Activated CD8-positive, alpha-beta T cell treated with anti-CD3 and anti-CD28 coated beads for 36 hours (primary cell): ENCODE measurements at regions of chr19 and their contacts with region 1.

Region 1: DNA sequence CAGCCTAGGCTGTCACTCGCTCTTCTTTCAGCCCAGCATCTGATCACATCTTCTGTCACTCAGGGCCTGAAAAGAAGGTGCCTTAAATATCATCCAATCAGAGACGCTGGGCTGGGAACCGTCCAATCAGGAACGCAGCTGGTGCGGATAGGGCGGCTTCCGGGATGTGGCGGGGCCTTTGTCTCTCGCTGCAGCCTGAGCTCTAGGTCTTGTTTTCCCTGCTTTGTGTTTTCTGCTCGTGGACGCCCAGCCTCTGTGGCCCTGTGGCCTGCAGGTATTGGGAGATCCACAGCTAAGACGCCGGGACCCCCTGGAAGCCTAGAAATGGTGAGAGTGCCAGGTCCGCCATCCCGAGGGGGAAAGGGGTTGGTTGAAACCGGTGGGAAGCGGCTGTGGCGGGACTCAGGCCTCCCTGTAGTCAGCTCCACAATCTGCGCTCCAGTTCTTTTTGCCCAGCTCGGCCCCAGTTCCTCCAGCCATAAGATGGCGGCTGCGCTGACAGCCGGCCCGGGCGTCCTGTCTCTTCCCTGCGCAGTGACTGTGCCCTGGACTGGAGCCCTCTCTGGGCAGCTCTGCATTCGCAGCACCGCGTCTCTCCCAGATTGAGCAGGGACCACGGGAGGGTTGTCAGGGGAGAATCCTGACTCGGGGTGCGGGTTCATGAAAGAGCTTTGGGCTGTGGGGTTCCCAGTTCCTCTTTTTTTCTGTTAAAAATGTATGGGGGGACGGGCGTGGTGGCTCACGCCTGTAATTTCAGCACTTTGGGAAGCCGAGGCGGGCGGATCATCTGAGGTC is at the start of gene ZNF85:
- DNase-seq: peak; percentile 97
- ATAC-seq: peak; percentile 99
- H3K4me3 Mint-ChIP-seq: peak within 1 kb of the TSS; percentile 99
- H3K27ac Mint-ChIP-seq: peak within 1 kb of the TSS; percentile 96
- H3K4me1 Mint-ChIP-seq: peaks cover 32% of the 10 kb centered on the region
- H3K27me3 Mint-ChIP-seq: no peaks in the 10 kb centered on the region
- CTCF ChIP-seq: no peak
- total RNA-seq, gene ZNF85: 17.6 to 18.6 TPM

Region 2: GRCh38 chr19:20999731-21000352 is 76.6 kb after region 1 on chr19:
- CTCF ChIA-PET with region 1: no interaction called
- POLR2A ChIA-PET with region 1: interaction called, 10 read pairs
- intact Hi-C with region 1: no loop called
- DNase-seq: peak; percentile 96
- ATAC-seq: peak; percentile 100
- H3K4me3 Mint-ChIP-seq: peak overlapping the region; percentile 96
- H3K27ac Mint-ChIP-seq: peak overlapping the region; percentile 95
- H3K4me1 Mint-ChIP-seq: peaks cover 8% of the 10 kb centered on the region
- H3K27me3 Mint-ChIP-seq: no peaks in the 10 kb centered on the region
- CTCF ChIP-seq: no peak